Mammary epithelial cell (primary cell): ENCODE measurements at regions of chr13 and their contacts with region 1.

Region 1: GRCh38 chr13:73708393-73708985 is 425.7 kb downstream of the KLF12 start:
- DNase-seq: peak; percentile 63
- H3K4me3 ChIP-seq: no peak overlapping the region
- H3K27ac ChIP-seq: peak overlapping the region; percentile 42
- H3K4me1 ChIP-seq: no peaks in the 10 kb centered on the region
- H3K27me3 ChIP-seq: no peaks in the 10 kb centered on the region
- CTCF ChIP-seq: peak; percentile 87 to 93

Region 2: DNA sequence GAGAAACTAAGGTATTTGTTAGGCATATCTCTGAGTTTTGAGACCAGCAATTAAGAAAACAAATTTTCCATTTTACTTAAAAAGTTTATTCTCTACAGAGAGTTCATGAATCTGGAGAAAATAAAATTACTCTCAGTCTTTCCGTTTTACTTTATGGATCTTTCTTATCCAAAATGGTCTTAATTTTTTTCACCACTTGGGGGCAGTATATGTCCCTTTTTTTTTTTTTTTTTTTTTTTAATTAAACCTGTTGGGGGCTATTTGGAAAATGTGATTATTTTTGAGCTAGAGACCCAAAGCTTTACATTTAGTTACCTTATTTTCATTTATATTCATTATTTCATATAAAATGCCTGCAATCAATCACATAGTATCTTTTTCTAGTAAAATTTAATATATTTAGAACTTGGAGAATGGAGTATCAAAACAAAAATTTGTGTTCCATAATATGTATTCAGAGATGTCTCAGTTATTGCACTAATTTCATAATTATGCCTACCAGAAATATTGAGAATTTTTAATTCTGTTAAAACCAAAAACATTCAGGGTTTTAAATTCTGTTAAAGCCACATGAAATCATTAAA is 899.5 kb before region 1 on chr13:
- CTCF ChIA-PET with region 1: no interaction called
- dilution Hi-C with region 1: no loop called
- in situ Hi-C with region 1: loop called in 1 of 2 experiments (anchors 5 kb)
- intact Hi-C with region 1: no loop called
- DNase-seq: peak; percentile 5
- H3K4me3 ChIP-seq: no peak overlapping the region
- H3K27ac ChIP-seq: no peak overlapping the region
- H3K4me1 ChIP-seq: no peaks in the 10 kb centered on the region
- H3K27me3 ChIP-seq: no peaks in the 10 kb centered on the region
- CTCF ChIP-seq: peak; percentile 40 to 45

Region 3: GRCh38 chr13:73058736-73059459 is 649.6 kb before region 1 on chr13 and contains the start of gene KLF5:
- CTCF ChIA-PET with region 1: no interaction called
- dilution Hi-C with region 1: no loop called
- in situ Hi-C with region 1: loop called in 1 of 2 experiments (anchors 25 kb)
- intact Hi-C with region 1: loop called (anchors 1 kb)
- DNase-seq: peak; percentile 99
- H3K4me3 ChIP-seq: peak within 1 kb of the TSS; percentile 61 to 99 (median 86)
- H3K27ac ChIP-seq: peak within 1 kb of the TSS; percentile 99
- H3K4me1 ChIP-seq: peaks cover 43% of the 10 kb centered on the region
- H3K27me3 ChIP-seq: no peaks in the 10 kb centered on the region
- CTCF ChIP-seq: no peak
- total RNA-seq, gene KLF5: 34.3 to 175 TPM

Region 4: GRCh38 chr13:73090116-73090811 is 618.2 kb before region 1 on chr13:
- CTCF ChIA-PET with region 1: no interaction called
- dilution Hi-C with region 1: no loop called
- in situ Hi-C with region 1: loop called in 1 of 2 experiments (anchors 25 kb)
- intact Hi-C with region 1: no loop called
- DNase-seq: peak; percentile 91
- H3K4me3 ChIP-seq: no peak overlapping the region
- H3K27ac ChIP-seq: peak overlapping the region; percentile 42
- H3K4me1 ChIP-seq: peaks cover 5% of the 10 kb centered on the region
- H3K27me3 ChIP-seq: no peaks in the 10 kb centered on the region
- CTCF ChIP-seq: no peak

Region 5: GRCh38 chr13:73228546-73228945 is 479.9 kb before region 1 on chr13:
- CTCF ChIA-PET with region 1: no interaction called
- dilution Hi-C with region 1: no loop called
- in situ Hi-C with region 1: loop called in 1 of 2 experiments (anchors 25 kb)
- intact Hi-C with region 1: loop called (anchors 1 kb)
- DNase-seq: peak; percentile 45
- H3K4me3 ChIP-seq: no peak overlapping the region
- H3K27ac ChIP-seq: peak overlapping the region; percentile 9
- H3K4me1 ChIP-seq: peaks cover 27% of the 10 kb centered on the region
- H3K27me3 ChIP-seq: no peaks in the 10 kb centered on the region
- CTCF ChIP-seq: peak; percentile 25 to 48

Region 6: DNA sequence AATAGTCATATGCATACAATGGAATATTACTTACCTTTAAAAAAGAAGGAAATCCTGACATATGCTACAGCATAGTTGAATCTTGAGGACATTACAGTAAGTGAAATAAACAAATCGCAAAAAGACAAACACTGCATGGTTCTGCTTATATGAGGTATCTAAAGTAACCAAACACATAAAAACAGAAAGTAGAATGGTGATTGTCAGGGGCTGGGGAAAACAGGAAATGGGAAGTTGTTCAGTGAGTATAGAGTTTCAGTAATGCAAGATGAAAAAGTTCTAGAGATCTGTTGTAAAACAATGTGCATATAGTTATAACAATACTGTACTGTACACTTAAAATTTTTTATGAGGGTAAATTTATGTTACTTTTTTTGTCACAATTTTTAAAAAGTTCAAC is 430.3 kb before region 1 on chr13:
- CTCF ChIA-PET with region 1: no interaction called
- dilution Hi-C with region 1: no loop called
- in situ Hi-C with region 1: no loop called
- intact Hi-C with region 1: no loop called
- DNase-seq: no peak
- H3K4me3 ChIP-seq: no peak overlapping the region
- H3K27ac ChIP-seq: no peak overlapping the region
- H3K4me1 ChIP-seq: peaks cover 6% of the 10 kb centered on the region
- H3K27me3 ChIP-seq: no peaks in the 10 kb centered on the region
- CTCF ChIP-seq: no peak

Region 7: GRCh38 chr13:73465617-73465971 is 242.9 kb before region 1 on chr13:
- CTCF ChIA-PET with region 1: no interaction called
- dilution Hi-C with region 1: no loop called
- in situ Hi-C with region 1: no loop called
- intact Hi-C with region 1: loop called (anchors 5 kb)
- DNase-seq: peak; percentile 96
- H3K4me3 ChIP-seq: no peak overlapping the region
- H3K27ac ChIP-seq: peak overlapping the region; percentile 94
- H3K4me1 ChIP-seq: peaks cover 31% of the 10 kb centered on the region
- H3K27me3 ChIP-seq: no peaks in the 10 kb centered on the region
- CTCF ChIP-seq: peak; percentile 11 to 34

Region 8: GRCh38 chr13:73544175-73544574 is 164.3 kb before region 1 on chr13:
- CTCF ChIA-PET with region 1: no interaction called
- dilution Hi-C with region 1: no loop called
- in situ Hi-C with region 1: no loop called
- intact Hi-C with region 1: loop called (anchors 5 kb)
- DNase-seq: no peak
- H3K4me3 ChIP-seq: no peak overlapping the region
- H3K27ac ChIP-seq: no peak overlapping the region
- H3K4me1 ChIP-seq: peaks cover 18% of the 10 kb centered on the region
- H3K27me3 ChIP-seq: no peaks in the 10 kb centered on the region
- CTCF ChIP-seq: peak in 1 of 2 donors; percentile 27